ENCODE measurements at regions of chr12 and their contacts with region 1.

Region 1: GRCh38 chr12:125183187-125184067 is 118.2 kb downstream of the AACS start:
- DNase-seq: peak; percentile 86
- ATAC-seq: peak; percentile 72

Region 2: DNA sequence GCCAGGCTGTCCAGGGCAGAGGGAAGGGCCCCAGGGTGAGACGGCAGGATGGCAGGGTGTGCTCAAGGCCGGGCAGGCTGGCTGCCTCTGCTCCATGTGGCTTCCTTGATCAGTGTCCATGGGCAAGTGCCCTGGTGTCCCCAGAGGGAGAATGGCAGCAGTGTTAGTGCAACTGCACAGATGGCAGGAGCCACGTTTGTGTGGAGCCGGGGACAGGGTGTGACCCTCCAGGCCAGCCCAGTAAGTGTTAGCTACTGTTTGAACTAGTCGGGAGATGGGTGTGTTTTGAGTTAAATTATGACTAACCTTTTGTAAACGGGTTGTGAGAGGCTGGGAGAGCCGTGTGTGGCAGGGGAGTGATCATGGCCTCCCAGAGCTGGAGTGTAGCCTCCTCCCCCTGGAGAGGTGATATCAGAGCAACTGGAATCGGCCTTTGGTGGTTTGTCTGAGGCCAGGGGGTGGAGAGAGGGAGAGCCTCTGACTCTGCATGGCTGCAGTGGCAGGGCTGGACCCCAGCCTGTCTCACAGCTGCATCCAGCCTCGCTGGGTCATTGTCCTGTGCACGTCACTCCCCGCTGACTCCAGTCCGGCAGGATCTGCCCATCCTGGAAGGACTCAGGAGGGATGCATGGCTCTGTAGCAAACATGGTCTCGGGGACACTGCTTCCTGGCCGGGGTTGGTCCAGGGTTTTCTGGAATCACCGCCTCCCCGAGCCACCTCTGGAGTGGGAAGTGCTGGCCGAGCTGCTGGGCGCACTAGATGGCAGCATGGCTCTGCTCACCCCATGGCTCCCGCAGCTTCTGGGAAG is 90.4 kb before region 1 on chr12:
- intact Hi-C with region 1: loop called (anchors 10 kb)
- DNase-seq: peak; percentile 67
- ATAC-seq: peak; percentile 85

Region 3: GRCh38 chr12:125140279-125141209 is 42.9 kb before region 1 on chr12:
- intact Hi-C with region 1: no loop called
- DNase-seq: no peak
- ATAC-seq: no peak

Region 4: GRCh38 chr12:125228519-125229260 is 45.3 kb after region 1 on chr12:
- intact Hi-C with region 1: no loop called
- DNase-seq: no peak
- ATAC-seq: no peak

Region 5: DNA sequence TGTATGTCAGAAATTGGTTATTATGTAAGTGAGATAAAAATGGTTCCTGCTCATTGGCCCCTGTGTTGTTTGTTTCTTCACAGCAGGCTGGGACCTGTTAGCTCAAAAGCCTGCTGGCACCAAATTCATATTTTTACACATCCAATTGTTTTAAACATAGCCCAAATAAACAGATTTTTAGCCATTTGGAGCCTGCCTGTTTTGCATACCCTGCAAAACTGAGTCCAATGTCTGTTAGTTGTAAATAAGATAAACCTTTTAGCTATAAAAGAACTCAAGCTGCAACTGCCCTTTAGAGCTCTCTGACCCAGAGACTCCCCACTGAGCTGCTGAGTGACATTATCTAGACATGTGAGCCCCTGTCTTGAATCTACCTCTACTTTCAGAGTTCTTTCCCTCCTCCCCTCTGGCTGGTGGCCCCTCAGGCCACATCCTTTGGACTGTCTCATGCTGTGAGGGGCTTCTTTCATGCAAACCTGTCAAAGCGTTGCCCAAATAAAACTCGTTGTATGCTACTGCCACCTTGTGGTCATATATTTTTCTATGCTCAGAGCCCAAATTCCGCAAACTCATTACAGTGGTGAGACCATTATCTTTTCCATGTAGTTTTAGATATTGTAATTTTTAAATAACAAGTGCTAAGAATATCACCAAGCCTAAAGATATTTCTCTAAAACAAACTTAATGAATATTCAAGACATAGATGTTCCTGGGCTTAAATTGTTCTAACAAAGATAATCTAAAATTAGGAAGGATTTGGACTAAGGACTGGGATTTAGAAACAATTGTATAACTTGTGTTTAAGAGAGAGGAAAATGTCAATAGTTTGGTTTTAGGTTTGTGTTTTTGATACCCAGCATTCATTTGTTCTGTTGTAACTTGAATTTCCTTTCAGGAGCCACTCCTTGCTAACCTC is 219.7 kb after region 1 on chr12:
- intact Hi-C with region 1: loop called (anchors 5 kb)
- DNase-seq: no peak
- ATAC-seq: no peak

Region 6: DNA sequence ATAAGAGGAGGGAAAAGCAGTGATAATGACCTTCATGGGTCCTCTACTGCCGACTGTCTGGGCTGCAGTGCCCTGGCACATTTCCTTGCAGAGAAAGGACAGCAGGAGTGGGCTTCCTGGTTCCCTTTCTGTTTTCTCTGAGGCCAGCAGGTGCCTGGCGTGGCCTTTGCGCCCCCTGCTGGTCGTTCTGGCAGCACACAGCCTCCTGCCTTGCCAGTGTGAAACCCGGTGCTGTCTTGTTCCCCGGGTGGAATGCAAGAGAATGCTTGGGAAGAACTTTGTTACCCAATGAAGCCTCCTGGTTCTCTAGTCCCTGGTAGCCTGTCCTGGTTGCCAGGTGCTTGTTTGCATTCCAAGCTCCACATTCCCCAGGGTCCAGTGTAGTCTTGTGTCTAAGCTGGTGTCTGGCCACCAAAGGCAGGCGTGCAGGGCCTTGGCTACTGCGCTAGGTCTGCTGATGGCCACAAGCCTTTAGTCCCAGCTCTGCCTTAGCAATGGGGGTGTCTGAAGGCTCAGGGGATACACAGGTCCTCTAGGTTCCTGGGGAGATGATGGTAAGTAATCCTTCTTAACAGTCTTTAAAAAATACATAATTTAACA is 1691.1 kb after region 1 on chr12:
- intact Hi-C with region 1: loop called (anchors 10 kb)
- DNase-seq: peak; percentile 71
- ATAC-seq: peak; percentile 68